ENCODE measurements at regions of chr5 and their contacts with region 1.

Region 1: GRCh38 chr5:124748687-124749594 is 2.5 kb upstream of the ZNF608 start:
- DNase-seq: peak; percentile 37
- ATAC-seq: peak; percentile 71
- H3K4me3 Mint-ChIP-seq: no peak overlapping the region
- H3K27ac Mint-ChIP-seq: no peak overlapping the region
- H3K4me1 Mint-ChIP-seq: peaks cover 17% of the 10 kb centered on the region
- H3K27me3 Mint-ChIP-seq: no peaks in the 10 kb centered on the region
- CTCF ChIP-seq: no peak

Region 2: DNA sequence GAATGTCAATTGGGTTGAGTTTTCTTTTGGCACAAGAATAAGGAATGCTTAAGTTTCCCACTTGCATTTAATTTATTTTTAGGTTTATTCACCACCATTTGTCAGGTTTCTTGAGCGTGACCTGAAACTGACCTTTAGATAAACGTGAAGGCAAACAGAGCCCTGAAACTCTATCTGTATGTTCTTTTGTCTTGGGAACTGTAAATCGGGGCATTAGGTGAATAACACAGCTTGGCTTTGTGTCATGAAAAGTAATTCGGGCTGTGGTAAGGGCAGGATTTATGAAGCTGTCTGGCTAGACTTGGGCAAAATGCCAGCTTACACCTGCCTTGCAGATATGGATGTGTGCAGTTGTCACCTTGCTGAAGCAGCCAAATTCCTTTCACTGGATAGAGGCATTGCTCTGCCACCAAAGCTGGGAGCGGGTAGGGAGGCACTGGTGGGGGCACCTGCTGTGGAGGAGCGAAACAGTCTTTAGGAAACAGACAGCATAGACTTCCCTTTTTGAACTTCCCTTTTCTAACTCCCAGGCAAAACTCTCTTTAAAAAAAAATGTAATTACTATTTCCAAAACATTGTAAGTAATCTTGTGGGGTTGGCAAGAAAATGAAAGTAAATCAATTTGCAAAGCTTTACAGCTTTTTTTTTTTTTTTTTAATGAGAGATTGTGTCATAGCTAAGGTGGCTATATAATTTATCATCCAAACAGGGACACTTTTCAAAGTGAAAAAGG is 691.8 kb before region 1 on chr5:
- CTCF ChIA-PET with region 1: no interaction called
- POLR2A ChIA-PET with region 1: interaction called, 6 read pairs
- intact Hi-C with region 1: loop called (anchors 1 kb)
- DNase-seq: peak; percentile 59
- ATAC-seq: peak; percentile 85
- H3K4me3 Mint-ChIP-seq: peak overlapping the region; percentile 82
- H3K27ac Mint-ChIP-seq: peak overlapping the region; percentile 90
- H3K4me1 Mint-ChIP-seq: peaks cover 57% of the 10 kb centered on the region
- H3K27me3 Mint-ChIP-seq: no peaks in the 10 kb centered on the region
- CTCF ChIP-seq: no peak

Region 3: GRCh38 chr5:124583469-124584350 is 165.2 kb before region 1 on chr5:
- CTCF ChIA-PET with region 1: interaction called, 4 read pairs
- POLR2A ChIA-PET with region 1: interaction called, 26 read pairs
- intact Hi-C with region 1: loop called (anchors 1 kb)
- DNase-seq: peak; percentile 23
- ATAC-seq: peak; percentile 89
- H3K4me3 Mint-ChIP-seq: peak overlapping the region; percentile 61
- H3K27ac Mint-ChIP-seq: peak overlapping the region; percentile 94
- H3K4me1 Mint-ChIP-seq: peaks cover 36% of the 10 kb centered on the region
- H3K27me3 Mint-ChIP-seq: no peaks in the 10 kb centered on the region
- CTCF ChIP-seq: no peak

Region 4: DNA sequence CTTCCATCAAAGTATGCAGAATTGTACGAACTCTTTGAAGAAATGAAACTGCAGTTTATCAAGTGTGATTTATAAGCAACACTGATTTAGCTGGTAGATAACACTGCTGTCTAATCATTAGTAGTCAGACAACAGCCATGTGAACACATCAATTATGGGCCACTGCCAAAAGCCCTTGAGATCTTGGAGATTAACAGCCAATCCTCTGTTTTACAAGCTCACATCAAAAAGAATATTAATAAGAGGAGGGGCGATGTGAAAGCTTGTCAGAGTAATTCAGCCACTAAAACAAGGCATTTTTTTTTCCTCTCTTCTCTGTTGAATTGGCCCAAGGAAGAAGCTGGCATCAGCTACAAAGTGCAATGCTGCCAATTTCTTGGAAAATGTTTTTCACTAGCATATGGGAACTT is 30.6 kb before region 1 on chr5:
- CTCF ChIA-PET with region 1: no interaction called
- POLR2A ChIA-PET with region 1: interaction called, 40 read pairs
- intact Hi-C with region 1: no loop called
- DNase-seq: no peak
- ATAC-seq: no peak
- H3K4me3 Mint-ChIP-seq: peak overlapping the region; percentile 37
- H3K27ac Mint-ChIP-seq: peak overlapping the region; percentile 65
- H3K4me1 Mint-ChIP-seq: peaks cover 60% of the 10 kb centered on the region
- H3K27me3 Mint-ChIP-seq: no peaks in the 10 kb centered on the region
- CTCF ChIP-seq: no peak

Region 5: DNA sequence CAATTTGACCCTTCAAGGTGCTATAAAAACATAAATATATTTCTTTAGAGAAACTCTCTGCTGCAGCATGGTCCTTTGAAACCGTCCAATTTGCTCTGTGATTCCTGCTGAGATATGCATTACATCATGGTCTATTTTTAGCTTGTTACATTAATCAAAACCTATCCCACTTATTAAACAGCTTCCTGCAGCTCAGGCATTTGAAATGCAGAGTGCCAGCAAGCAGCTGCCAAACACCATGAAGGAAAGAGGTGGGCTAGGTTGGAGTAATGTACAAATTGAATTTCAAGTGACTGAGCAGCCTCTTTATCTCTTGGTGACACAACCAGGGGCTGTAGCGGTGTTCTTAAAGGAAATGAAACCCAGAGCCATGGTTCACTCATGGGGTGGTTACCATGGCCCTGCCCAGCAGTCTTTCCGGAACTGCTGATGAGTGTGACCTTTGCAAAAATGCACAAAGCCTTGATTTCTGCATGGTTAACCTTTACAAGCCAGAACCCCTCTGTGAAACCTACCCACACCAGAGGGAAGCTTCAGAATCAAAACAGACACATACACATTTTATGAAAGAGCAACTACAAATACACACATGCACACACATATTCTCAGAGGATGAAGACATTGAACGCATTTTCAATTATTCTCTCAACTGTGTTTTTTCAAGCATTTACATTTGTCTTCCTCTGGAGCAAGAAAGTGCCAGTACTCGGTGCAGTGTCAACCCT is 153.3 kb after region 1 on chr5:
- CTCF ChIA-PET with region 1: no interaction called
- POLR2A ChIA-PET with region 1: interaction called, 35 read pairs
- intact Hi-C with region 1: loop called (anchors 1 kb)
- DNase-seq: peak; percentile 37
- ATAC-seq: peak; percentile 98
- H3K4me3 Mint-ChIP-seq: peak overlapping the region; percentile 72
- H3K27ac Mint-ChIP-seq: peak overlapping the region; percentile 88
- H3K4me1 Mint-ChIP-seq: peaks cover 40% of the 10 kb centered on the region
- H3K27me3 Mint-ChIP-seq: no peaks in the 10 kb centered on the region
- CTCF ChIP-seq: no peak

Region 6: DNA sequence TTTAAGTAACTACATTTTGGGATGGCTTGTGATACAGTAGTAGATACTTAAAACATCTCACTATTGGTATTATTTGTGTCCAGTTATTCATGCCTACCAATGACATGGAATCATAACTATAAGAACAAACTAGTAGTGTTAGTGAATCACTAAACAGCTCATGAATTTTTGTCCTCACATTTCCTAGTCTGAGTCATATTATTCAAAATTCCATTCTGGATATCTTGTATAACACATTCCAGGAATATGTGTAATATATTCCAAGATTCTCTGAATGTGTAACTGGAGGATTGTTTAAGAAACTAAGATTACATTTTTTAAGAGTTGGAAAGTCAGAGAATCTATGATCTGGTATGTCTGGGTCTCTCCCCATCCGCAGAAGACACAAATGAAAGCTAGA is 562.8 kb after region 1 on chr5:
- CTCF ChIA-PET with region 1: no interaction called
- POLR2A ChIA-PET with region 1: interaction called, 12 read pairs
- intact Hi-C with region 1: no loop called
- DNase-seq: no peak
- ATAC-seq: no peak
- H3K4me3 Mint-ChIP-seq: no peak overlapping the region
- H3K27ac Mint-ChIP-seq: no peak overlapping the region
- H3K4me1 Mint-ChIP-seq: no peaks in the 10 kb centered on the region
- H3K27me3 Mint-ChIP-seq: no peaks in the 10 kb centered on the region
- CTCF ChIP-seq: no peak

Measured in activated B cell treated with CpG ODN at 0.5 μM for 24 hours (primary cell).